Activated CD4-positive, alpha-beta T cell treated with anti-CD3 and anti-CD28 coated beads for 36 hours (primary cell): ENCODE measurements at regions of chr21 and their contacts with region 1.

Region 1: GRCh38 chr21:17512253-17513213 is at the start of gene CXADR:
- DNase-seq: peak; percentile 88
- ATAC-seq: peak; percentile 94
- H3K4me3 Mint-ChIP-seq: peak within 1 kb of the TSS; percentile 81
- H3K27ac Mint-ChIP-seq: peak within 1 kb of the TSS; percentile 62
- H3K4me1 Mint-ChIP-seq: peaks cover 18% of the 10 kb centered on the region
- H3K27me3 Mint-ChIP-seq: peaks cover 24% of the 10 kb centered on the region
- total RNA-seq, gene CXADR: 0.30 to 0.91 TPM

Region 2: DNA sequence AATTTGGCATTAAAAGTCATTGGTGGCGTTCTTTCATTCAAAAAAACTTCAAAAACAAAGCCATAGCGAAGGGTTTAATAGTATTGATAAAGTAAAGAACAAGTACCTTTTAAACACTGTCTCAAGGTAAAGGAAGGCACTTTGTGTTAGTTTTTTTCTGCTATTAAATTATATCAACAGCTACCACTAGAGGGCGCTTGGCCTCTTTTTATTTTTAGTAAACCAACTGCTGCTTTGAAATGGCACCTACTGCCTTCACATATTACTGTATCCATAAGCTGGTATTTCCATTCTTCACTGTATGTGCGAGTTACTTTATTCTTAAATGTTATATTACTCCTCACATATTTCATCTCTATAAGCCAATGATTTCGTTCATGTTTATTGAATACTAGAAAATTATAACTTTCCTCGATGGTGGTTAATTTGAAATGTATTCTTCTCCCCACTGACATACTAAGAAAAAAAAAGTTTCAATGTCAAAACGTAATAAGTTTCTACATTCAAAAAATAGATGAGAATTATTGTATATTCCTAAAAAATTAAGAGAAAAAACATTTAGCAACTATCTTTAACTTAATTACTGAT is 125.4 kb before region 1 on chr21:
- CTCF ChIA-PET with region 1: interaction called, 3 read pairs
- POLR2A ChIA-PET with region 1: no interaction called
- intact Hi-C with region 1: loop called in 1 of 2 experiments (anchors 2 kb)
- DNase-seq: peak; percentile 65
- ATAC-seq: peak; percentile 30
- H3K4me3 Mint-ChIP-seq: no peak overlapping the region
- H3K27ac Mint-ChIP-seq: no peak overlapping the region
- H3K4me1 Mint-ChIP-seq: no peaks in the 10 kb centered on the region
- H3K27me3 Mint-ChIP-seq: peaks cover 3% of the 10 kb centered on the region

Region 3: GRCh38 chr21:17454315-17455027 is 58.1 kb before region 1 on chr21:
- CTCF ChIA-PET with region 1: no interaction called
- POLR2A ChIA-PET with region 1: no interaction called
- intact Hi-C with region 1: loop called in 1 of 2 experiments (anchors 1 kb)
- DNase-seq: peak; percentile 69
- ATAC-seq: peak; percentile 77
- H3K4me3 Mint-ChIP-seq: peak overlapping the region; percentile 44
- H3K27ac Mint-ChIP-seq: peak overlapping the region; percentile 78
- H3K4me1 Mint-ChIP-seq: peaks cover 6% of the 10 kb centered on the region
- H3K27me3 Mint-ChIP-seq: peaks cover 10% of the 10 kb centered on the region

Region 4: DNA sequence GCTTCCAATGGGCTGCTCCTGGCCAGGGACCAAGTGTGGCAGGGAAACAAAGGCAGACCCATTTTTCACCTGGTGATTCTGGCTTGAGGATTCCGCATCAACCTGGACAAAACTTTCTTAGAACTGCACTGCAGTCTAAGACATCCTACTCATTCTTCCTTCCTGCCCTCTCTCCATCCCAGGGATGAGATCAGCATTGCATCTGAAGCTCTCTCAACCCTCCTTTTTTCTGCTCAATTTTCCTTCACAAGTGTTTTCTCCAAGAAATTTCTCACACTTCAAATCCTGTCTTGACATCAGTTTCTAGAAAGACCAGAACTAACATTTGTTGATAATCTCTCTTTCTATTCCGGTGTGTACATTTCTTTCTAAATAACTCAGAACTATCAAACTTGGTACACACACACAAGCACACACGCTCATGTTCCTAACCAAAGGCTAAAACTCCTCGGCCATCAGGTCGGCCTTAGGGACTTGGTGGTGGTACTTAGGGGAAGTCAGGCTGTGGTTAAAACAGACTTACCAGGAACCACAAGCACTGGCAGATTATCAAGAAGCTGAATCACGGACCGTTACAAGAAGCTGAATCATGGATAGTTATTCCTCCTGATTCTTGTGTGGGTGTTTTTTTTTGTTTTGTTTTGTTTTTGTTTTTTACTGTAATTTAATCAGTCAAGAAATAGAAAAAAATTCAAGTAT is 20.7 kb before region 1 on chr21:
- CTCF ChIA-PET with region 1: no interaction called
- POLR2A ChIA-PET with region 1: no interaction called
- intact Hi-C with region 1: loop called in 1 of 2 experiments (anchors 2 kb)
- DNase-seq: peak; percentile 25
- ATAC-seq: no peak
- H3K4me3 Mint-ChIP-seq: no peak overlapping the region
- H3K27ac Mint-ChIP-seq: no peak overlapping the region
- H3K4me1 Mint-ChIP-seq: peaks cover 16% of the 10 kb centered on the region
- H3K27me3 Mint-ChIP-seq: peaks cover 10% of the 10 kb centered on the region

Region 5: GRCh38 chr21:17585875-17586450 is 73.4 kb after region 1 on chr21:
- CTCF ChIA-PET with region 1: interaction called, 6 read pairs
- POLR2A ChIA-PET with region 1: no interaction called
- intact Hi-C with region 1: loop called in 1 of 2 experiments (anchors 5 kb)
- DNase-seq: no peak
- ATAC-seq: no peak
- H3K4me3 Mint-ChIP-seq: no peak overlapping the region
- H3K27ac Mint-ChIP-seq: no peak overlapping the region
- H3K4me1 Mint-ChIP-seq: no peaks in the 10 kb centered on the region
- H3K27me3 Mint-ChIP-seq: no peaks in the 10 kb centered on the region

Region 6: GRCh38 chr21:17611414-17612022 is 99.0 kb after region 1 on chr21:
- CTCF ChIA-PET with region 1: interaction called, 4 read pairs
- POLR2A ChIA-PET with region 1: interaction called, 5 read pairs
- intact Hi-C with region 1: loop called (anchors 1 to 2 kb)
- DNase-seq: peak; percentile 91
- ATAC-seq: peak; percentile 64
- H3K4me3 Mint-ChIP-seq: peak overlapping the region; percentile 75
- H3K27ac Mint-ChIP-seq: peak overlapping the region; percentile 94
- H3K4me1 Mint-ChIP-seq: peaks cover 35% of the 10 kb centered on the region
- H3K27me3 Mint-ChIP-seq: no peaks in the 10 kb centered on the region

Region 7: GRCh38 chr21:17819114-17819876 is 306.8 kb after region 1 on chr21 and contains the start of gene C21orf91:
- CTCF ChIA-PET with region 1: interaction called, 3 read pairs
- POLR2A ChIA-PET with region 1: no interaction called
- intact Hi-C with region 1: loop called in 1 of 2 experiments (anchors 1 kb)
- DNase-seq: peak; percentile 93
- ATAC-seq: peak; percentile 89
- H3K4me3 Mint-ChIP-seq: peak within 1 kb of the TSS; percentile 91
- H3K27ac Mint-ChIP-seq: peak within 1 kb of the TSS; percentile 98
- H3K4me1 Mint-ChIP-seq: peaks cover 39% of the 10 kb centered on the region
- H3K27me3 Mint-ChIP-seq: no peaks in the 10 kb centered on the region
- total RNA-seq, gene C21orf91: 20.8 to 22.9 TPM